Natural killer cell (primary cell): ENCODE measurements at regions of chr4 and their contacts with region 1.

Region 1: DNA sequence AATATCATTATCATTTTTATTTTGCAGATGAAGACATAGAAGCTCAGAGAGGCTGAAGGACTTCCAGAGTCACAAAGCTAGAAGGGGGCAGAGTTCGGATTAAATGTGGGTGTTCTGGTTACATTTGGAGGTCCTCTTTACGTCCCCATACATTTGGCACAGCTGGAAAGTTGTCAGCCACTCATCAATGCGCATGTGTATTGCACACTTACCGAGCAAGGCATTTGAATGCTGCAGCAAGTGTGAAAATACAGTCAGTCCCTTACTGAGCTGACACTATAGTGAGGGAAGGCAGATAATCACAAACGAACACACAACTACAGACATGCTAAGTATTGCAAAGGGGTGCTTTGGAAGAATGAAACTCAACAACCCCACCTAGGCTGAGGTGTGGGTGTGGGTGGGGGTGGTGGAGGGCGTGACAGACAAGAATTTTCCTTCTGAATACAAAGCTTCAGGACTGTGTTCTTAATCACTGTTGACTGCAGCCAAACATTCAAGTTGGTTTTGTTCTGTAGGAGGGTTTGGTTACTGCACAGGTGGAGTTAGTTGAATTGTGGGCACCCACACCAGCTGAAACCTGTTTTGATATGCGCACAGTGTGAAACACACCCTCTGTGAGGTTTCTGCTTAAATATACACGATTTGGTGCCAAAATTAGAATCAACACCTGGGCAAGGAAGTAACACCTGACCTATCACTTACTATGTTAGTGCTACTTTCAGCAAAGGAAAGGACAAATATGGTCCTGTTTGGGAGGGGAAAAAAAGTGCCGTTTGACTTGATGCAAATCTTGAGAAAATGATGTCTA is 72.4 kb downstream of the COQ2 start:
- DNase-seq: peak; percentile 65 to 89
- ATAC-seq: peak; percentile 85 to 95 (median 91)
- H3K4me3 ChIP-seq: no peak overlapping the region
- H3K4me3 Mint-ChIP-seq: peak overlapping the region; percentile 83
- H3K27ac ChIP-seq: peak overlapping the region; percentile 75
- H3K27ac Mint-ChIP-seq: peak overlapping the region; percentile 92 to 93
- H3K4me1 ChIP-seq: peaks cover 64% of the 10 kb centered on the region
- H3K4me1 Mint-ChIP-seq: peaks cover 94% of the 10 kb centered on the region in 2 donors
- H3K27me3 ChIP-seq: no peaks in the 10 kb centered on the region
- H3K27me3 Mint-ChIP-seq: no peaks in the 10 kb centered on the region
- CTCF ChIP-seq: no peak

Region 2: DNA sequence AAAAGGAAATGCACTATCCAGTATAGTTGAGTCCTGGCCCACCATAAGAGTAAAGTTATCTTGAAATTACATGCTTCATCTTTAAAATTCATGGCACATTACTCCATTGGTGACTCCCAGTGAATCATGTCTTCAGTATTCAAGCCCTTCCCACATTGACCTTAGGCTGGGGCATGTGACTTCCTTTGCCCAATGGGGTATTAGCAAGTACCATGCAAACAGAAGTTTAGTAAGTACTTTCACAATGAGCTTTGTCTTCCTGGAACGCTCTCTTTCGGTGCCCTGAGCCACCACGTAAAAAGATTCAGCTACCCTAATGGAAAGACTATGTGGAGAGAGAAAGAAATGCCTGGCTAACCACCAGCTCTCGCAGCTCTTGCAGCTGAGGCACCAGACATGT is 1073.9 kb before region 1 on chr4:
- intact Hi-C with region 1: no loop called
- DNase-seq: no peak
- ATAC-seq: no peak
- H3K4me3 ChIP-seq: no peak overlapping the region
- H3K4me3 Mint-ChIP-seq: no peak overlapping the region
- H3K27ac ChIP-seq: no peak overlapping the region
- H3K27ac Mint-ChIP-seq: no peak overlapping the region
- H3K4me1 ChIP-seq: no peaks in the 10 kb centered on the region
- H3K4me1 Mint-ChIP-seq: peaks cover 8 to 9% of the 10 kb centered on the region in 2 donors
- H3K27me3 ChIP-seq: no peaks in the 10 kb centered on the region
- H3K27me3 Mint-ChIP-seq: no peaks in the 10 kb centered on the region
- CTCF ChIP-seq: no peak

Region 3: GRCh38 chr4:83138946-83139345 is 73.3 kb before region 1 on chr4:
- intact Hi-C with region 1: loop called (anchors 1 kb)
- DNase-seq: peak; percentile 59 to 60
- ATAC-seq: peak; percentile 91 to 99 (median 92)
- H3K4me3 ChIP-seq: no peak overlapping the region
- H3K4me3 Mint-ChIP-seq: peak overlapping the region; percentile 72
- H3K27ac ChIP-seq: peak overlapping the region; percentile 77
- H3K27ac Mint-ChIP-seq: peak overlapping the region; percentile 87 to 95
- H3K4me1 ChIP-seq: peaks cover 34% of the 10 kb centered on the region
- H3K4me1 Mint-ChIP-seq: peaks cover 53 to 61% of the 10 kb centered on the region in 2 donors
- H3K27me3 ChIP-seq: no peaks in the 10 kb centered on the region
- H3K27me3 Mint-ChIP-seq: no peaks in the 10 kb centered on the region
- CTCF ChIP-seq: no peak

Region 4: DNA sequence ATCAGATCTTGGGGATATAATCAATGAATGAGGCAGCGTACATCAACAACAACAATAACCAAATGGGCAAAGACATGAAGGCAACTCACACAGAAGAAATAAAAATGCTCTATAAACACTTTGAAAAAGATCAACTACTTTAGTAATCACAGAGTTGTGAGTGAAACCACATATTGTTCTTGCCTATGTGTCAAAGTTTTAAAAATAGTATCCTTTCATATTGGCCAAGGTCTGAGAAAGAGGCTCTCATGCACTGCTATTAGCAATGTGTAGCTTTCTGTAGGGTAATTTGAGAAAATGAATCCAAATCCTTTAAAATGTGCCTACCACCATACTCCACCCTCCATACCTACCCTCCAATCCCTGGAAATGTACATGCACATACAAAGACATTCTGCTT is 47.3 kb after region 1 on chr4:
- intact Hi-C with region 1: loop called (anchors 2 kb)
- DNase-seq: no peak
- ATAC-seq: peak in 2 of 3 donors; percentile 41 to 48
- H3K4me3 ChIP-seq: no peak overlapping the region
- H3K4me3 Mint-ChIP-seq: peak overlapping the region; percentile 0
- H3K27ac ChIP-seq: peak overlapping the region; percentile 46
- H3K27ac Mint-ChIP-seq: peak overlapping the region; percentile 37 to 59
- H3K4me1 ChIP-seq: peaks cover 23% of the 10 kb centered on the region
- H3K4me1 Mint-ChIP-seq: peaks cover 31 to 33% of the 10 kb centered on the region in 2 donors
- H3K27me3 ChIP-seq: no peaks in the 10 kb centered on the region
- H3K27me3 Mint-ChIP-seq: no peaks in the 10 kb centered on the region
- CTCF ChIP-seq: no peak